ENCODE measurements at regions of chr20 and their contacts with region 1.

Region 1: DNA sequence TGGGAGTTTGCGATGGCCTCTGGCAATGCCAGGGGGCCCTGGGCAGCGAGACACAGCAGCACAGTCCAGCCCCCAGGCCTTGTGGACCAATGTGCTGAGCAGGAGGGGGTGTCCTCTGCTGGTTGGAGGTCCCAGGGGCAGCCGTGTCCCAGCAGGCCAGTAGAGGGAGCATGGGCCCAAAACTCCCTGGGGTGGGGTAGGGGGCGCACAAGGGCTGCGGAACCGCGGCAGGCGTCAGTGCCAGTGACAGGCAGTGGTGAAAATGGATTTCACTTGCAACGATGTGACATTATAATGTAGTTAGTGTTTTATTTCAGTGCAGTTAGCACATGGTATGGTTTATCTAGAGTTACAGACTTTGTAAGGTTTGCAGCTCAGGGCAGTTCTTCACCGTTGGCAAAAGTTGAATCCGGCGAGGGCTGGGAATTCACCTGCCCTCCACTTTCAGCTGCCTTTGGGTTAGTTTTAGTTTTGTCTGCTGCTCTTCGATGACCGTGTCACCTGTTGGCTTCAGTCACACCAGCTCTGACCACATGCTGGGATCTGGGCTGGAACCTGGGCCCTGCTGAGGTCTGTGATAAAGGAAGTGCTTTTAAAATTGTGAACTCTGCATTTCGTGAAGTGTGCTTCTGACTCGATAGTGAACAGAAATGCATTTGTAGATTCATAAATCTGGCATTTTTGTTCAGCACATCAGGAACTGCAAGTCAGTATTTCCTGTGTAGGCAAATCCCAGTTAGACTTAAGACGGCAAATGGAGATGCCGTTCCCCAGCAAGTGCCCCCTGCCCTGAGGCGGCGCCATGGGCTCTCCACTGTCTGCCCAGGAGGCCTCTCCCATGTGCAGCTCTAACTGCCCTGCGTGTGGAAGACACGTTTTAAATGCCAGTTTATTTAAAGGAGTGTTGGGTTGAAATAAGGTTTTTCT is 46.8 kb downstream of the PYGB start:
- DNase-seq: peak; percentile 95
- H3K4me3 ChIP-seq: no peak overlapping the region
- H3K27ac ChIP-seq: peak overlapping the region in 1 of 2 experiments; percentile 66; a peak in 2 of 4 replicates
- H3K4me1 ChIP-seq: peaks cover under 1 to 24% of the 10 kb centered on the region in 2 experiments; a peak in 1 of 4 replicates
- H3K27me3 ChIP-seq: no peaks in the 10 kb centered on the region
- CTCF ChIP-seq: peak; percentile 91
- EP300 ChIP-seq: no peak
- RAD21 ChIP-seq: peak; percentile 88

Region 2: GRCh38 chr20:25254986-25255680 is 39.6 kb before region 1 on chr20:
- CTCF ChIA-PET with region 1: interaction called, 16 read pairs
- POLR2A ChIA-PET with region 1: no interaction called
- DNase-seq: peak; percentile 68
- H3K4me3 ChIP-seq: no peak overlapping the region
- H3K27ac ChIP-seq: peak overlapping the region in 1 of 2 experiments; percentile 69; a peak in 2 of 4 replicates
- H3K4me1 ChIP-seq: peaks cover 9 to 54% of the 10 kb centered on the region in 2 experiments
- H3K27me3 ChIP-seq: no peaks in the 10 kb centered on the region
- CTCF ChIP-seq: no peak; the same call in 1 of the 2 replicates
- EP300 ChIP-seq: no peak
- RAD21 ChIP-seq: peak; percentile 42

Region 3: GRCh38 chr20:25281541-25281991 is 13.2 kb before region 1 on chr20:
- CTCF ChIA-PET with region 1: interaction called, 46 read pairs
- POLR2A ChIA-PET with region 1: no interaction called
- DNase-seq: no peak
- H3K4me3 ChIP-seq: no peak overlapping the region
- H3K27ac ChIP-seq: no peak overlapping the region
- H3K4me1 ChIP-seq: peaks cover 0 to 16% of the 10 kb centered on the region in 2 experiments; a peak in 1 of 4 replicates
- H3K27me3 ChIP-seq: no peaks in the 10 kb centered on the region
- CTCF ChIP-seq: no peak
- EP300 ChIP-seq: no peak
- RAD21 ChIP-seq: no peak

Region 4: DNA sequence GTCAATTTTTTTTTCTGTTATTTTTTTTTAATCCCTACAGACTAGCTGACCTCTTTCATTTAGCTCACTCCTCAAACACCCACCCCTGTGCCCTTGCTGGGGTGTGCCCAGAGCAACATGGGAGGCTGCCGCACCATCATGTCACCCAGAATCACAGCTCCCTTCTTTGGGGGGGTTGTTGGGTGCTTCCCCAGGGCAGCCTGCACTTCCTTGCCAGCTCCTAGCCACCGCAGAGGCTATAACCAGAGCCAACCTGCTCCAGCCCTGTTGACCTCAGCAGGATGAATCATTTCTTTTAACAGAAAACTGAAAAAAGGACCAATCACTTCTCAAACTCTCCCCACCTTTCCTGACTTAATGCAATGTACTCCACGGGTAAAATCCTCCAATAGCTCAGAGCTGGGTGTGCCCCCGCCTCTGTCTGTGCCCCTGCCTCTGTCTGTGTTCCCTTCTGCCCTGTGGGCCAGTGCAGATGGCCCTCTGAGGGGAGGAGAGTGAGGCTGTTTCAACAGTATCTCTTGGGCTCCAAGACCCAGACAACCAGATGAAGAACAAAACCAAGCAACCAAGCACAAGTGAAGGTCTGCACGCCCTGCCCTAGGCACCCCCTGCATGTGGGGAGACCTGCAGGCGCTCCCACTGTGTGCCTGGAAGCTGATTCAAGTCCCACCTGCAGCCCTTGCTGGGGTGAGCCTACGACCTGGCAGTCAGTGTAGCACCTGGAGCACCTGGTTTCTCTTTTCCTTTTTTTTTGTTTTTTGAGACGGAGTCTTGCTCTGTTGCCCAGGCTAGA is 20.9 kb after region 1 on chr20:
- CTCF ChIA-PET with region 1: interaction called, 14 read pairs
- POLR2A ChIA-PET with region 1: no interaction called
- DNase-seq: no peak
- H3K4me3 ChIP-seq: no peak overlapping the region; a peak in 1 of 4 replicates
- H3K27ac ChIP-seq: peak overlapping the region in 1 of 2 experiments; percentile 40; a peak in 1 of 4 replicates
- H3K4me1 ChIP-seq: peaks cover 19 to 23% of the 10 kb centered on the region in 2 experiments; a peak in 3 of 4 replicates
- H3K27me3 ChIP-seq: no peaks in the 10 kb centered on the region
- CTCF ChIP-seq: no peak
- EP300 ChIP-seq: no peak
- RAD21 ChIP-seq: no peak

Region 5: GRCh38 chr20:25407311-25408169 is 112.8 kb after region 1 on chr20 and contains the start of gene GINS1:
- CTCF ChIA-PET with region 1: interaction called, 29 read pairs
- POLR2A ChIA-PET with region 1: interaction called, 3 read pairs
- DNase-seq: peak; percentile 96
- H3K4me3 ChIP-seq: peak within 1 kb of the TSS; percentile 72 to 83
- H3K27ac ChIP-seq: peak within 1 kb of the TSS; percentile 36 to 50
- H3K4me1 ChIP-seq: peaks cover 0 to 6% of the 10 kb centered on the region in 2 experiments; a peak in 1 of 4 replicates
- H3K27me3 ChIP-seq: no peaks in the 10 kb centered on the region
- CTCF ChIP-seq: no peak
- EP300 ChIP-seq: no peak
- RAD21 ChIP-seq: peak; percentile 14; the same call in 1 of the 2 replicates
- polyA plus RNA-seq, gene GINS1: 5.1 and 5.8 TPM in 2 replicates